Heart left ventricle (tissue), 16 donors: ENCODE measurements at regions of chr15 and their contacts with region 1.

Region 1: DNA sequence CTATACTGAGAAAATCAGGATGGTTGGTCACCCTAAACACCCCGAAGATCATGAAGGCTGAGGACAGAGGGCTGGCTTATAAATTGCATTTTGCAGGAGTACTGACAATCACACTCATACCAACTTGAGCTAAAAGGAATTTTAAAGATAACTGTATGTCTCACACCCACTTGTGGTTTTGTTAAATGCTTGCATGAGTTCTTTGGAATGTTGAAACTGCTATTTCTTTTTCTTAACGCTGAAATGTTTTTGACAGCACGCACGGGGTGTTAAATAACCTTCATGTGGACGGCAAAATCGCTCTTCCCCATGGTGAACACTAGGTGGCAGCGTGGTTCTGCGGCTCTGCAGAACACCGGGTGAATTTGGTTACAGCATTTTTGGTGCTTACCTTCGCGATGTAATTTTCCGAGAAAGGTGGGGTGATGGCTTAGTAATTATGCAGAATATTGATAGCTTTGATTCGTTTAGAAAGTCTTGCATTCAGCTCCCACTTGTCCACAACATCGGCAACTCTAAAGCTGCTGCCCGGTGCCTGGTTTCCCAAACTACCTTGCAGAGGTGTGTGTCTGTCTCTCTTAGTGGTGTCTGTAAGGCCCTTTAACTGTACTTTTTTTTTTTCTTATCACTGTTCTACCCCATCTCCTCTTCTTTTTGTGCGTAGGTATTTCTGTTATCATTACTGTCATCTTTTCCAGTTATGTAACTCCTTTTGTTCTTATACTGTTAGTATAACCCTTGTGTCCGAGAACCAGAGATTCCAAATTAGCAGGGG is 51.7 kb downstream of the ARNT2 start:
- DNase-seq: peak in 3 of 5 donors; percentile 49 to 62 (median 49)
- ATAC-seq: peak; percentile 42 to 74 (median 67)
- H3K4me3 ChIP-seq: no peak overlapping the region
- H3K27ac ChIP-seq: no peak overlapping the region
- H3K4me1 ChIP-seq: peaks cover 0 to 7% (median 0%) of the 10 kb centered on the region in 12 donors
- H3K27me3 ChIP-seq: peaks cover 0 to 29% (median 0%) of the 10 kb centered on the region in 9 donors
- CTCF ChIP-seq: peak; percentile 90 to 97 (median 93)
- POLR2A ChIP-seq: no peak

Region 2: DNA sequence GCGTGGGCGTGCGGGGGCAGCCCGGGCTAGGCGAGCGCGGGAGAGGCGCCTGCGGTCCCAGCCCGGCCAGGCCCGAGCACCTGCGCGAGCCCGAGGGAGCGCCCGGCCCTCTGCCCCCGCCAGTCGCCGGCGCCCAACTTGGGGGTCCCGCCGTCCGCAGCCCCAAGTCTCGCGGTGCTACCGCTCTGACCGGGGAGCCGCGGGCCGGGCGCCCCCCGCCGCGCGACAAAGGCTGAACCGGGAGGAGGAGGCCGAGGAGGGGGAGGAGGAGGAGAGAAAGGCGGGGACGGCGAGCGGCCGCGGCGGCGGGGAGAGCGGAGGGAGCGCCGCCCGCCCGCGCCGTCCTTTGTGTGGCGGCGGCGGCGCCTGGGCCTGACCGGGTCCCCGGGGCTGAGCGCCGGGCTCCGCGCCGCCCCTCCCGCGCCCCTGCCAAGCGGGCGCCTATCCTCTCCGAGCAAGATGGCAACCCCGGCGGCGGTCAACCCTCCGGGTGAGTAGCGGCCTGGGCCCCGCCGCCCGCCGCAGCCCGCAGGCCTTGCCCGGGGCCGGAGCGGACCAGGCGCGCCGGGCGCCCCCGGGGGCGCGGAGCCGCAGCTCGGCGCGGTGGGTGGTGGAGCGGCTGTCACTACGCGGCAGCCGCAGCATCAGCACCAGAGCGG is 51.7 kb before region 1 on chr15 and contains the start of gene ARNT2:
- intact Hi-C with region 1: no loop called
- DNase-seq: peak in 3 of 5 donors; percentile 28 to 61 (median 41)
- ATAC-seq: peak in 3 of 4 donors; percentile 44 to 82 (median 74)
- H3K4me3 ChIP-seq: peak within 1 kb of the TSS; percentile 9 to 72 (median 50)
- H3K27ac ChIP-seq: peak within 1 kb of the TSS in 4 of 12 donors; percentile 18 to 60 (median 42)
- H3K4me1 ChIP-seq: peaks cover 0 to 13% (median 0%) of the 10 kb centered on the region in 12 donors
- H3K27me3 ChIP-seq: peaks cover 0 to 53% (median 8%) of the 10 kb centered on the region in 9 donors
- CTCF ChIP-seq: no peak
- POLR2A ChIP-seq: no peak
- total RNA-seq, gene ARNT2: 1.9 to 10.0 (median 4.5) TPM

Region 3: DNA sequence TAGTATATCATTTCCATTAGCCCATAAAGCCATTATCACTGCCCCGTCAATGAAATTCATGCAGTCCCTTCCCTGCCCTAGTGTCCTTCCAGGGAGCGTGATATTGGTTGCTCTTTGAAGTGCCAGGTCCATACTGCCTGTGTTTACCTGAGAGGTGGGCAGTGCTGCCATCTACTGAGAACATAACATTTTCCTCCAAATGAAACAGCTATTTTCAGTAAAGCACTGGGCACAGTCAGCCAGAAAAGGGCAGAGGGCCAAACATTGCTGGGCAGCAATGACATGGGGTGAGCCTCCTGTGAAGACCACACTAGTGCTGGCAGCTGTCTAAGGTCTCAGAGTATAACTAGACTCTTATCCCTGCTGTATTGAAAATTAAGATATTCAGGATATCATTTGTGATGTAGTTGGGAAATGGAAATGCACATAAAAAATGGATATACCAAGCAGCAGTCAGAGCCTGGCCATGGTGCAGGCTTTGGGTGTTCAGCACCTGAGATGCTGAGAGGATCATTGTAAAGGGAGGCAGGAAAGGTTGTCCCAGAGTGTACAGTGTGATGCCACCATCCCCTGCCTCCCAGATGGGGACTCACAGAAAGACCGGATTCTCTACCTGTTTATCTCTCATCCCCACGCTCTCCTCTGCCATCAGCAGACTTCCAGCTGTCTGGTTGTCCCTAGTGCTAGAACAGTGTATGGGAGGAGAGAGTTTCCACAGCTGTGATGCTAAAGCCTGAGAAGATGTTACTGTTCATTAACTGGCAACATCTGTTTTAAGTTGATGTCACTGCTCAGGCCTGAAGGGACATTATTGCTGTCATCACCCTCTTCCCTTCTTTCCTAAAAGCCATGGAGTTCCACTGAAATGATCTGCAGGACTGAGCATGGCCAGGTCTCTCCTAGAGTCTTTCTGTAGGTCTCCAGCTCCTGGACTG is 57.1 kb after region 1 on chr15:
- intact Hi-C with region 1: loop called in 3 of 10 experiments (anchors 2 to 5 kb)
- DNase-seq: no peak
- ATAC-seq: peak; percentile 34 to 69 (median 53)
- H3K4me3 ChIP-seq: no peak overlapping the region
- H3K27ac ChIP-seq: no peak overlapping the region
- H3K4me1 ChIP-seq: peaks cover 0 to 14% (median 2%) of the 10 kb centered on the region in 12 donors
- H3K27me3 ChIP-seq: no peaks in the 10 kb centered on the region
- CTCF ChIP-seq: peak in 4 of 12 donors; percentile 13 to 31 (median 20)
- POLR2A ChIP-seq: no peak

Region 4: GRCh38 chr15:80567721-80568157 is 111.9 kb after region 1 on chr15:
- intact Hi-C with region 1: loop called in 9 of 10 experiments (anchors 2 to 10 kb)
- DNase-seq: peak in 4 of 5 donors; percentile 33 to 50 (median 48)
- ATAC-seq: peak; percentile 56 to 85 (median 81)
- H3K4me3 ChIP-seq: no peak overlapping the region
- H3K27ac ChIP-seq: no peak overlapping the region
- H3K4me1 ChIP-seq: peaks cover 0 to 6% (median 0%) of the 10 kb centered on the region in 12 donors
- H3K27me3 ChIP-seq: peaks cover 0 to 5% (median 0%) of the 10 kb centered on the region in 9 donors
- CTCF ChIP-seq: peak; percentile 46 to 79 (median 64)
- POLR2A ChIP-seq: no peak

Region 5: GRCh38 chr15:80776420-80777045 is 320.7 kb after region 1 on chr15:
- intact Hi-C with region 1: loop called (anchors 1 to 10 kb)
- DNase-seq: peak; percentile 64 to 77 (median 72)
- ATAC-seq: peak; percentile 38 to 66 (median 57)
- H3K4me3 ChIP-seq: no peak overlapping the region
- H3K27ac ChIP-seq: peak overlapping the region in 2 of 12 donors; percentile 40 to 58
- H3K4me1 ChIP-seq: peaks cover 2 to 49% (median 31%) of the 10 kb centered on the region in 12 donors
- H3K27me3 ChIP-seq: peaks cover 0 to 43% (median 19%) of the 10 kb centered on the region in 9 donors
- CTCF ChIP-seq: peak; percentile 74 to 89 (median 83)
- POLR2A ChIP-seq: no peak